Activated CD4-positive, alpha-beta T cell treated with anti-CD3 and anti-CD28 coated beads, Interleukin-2, amount 10 ng/mL, durations not matched to agents 24 days and 14 days (primary cell): ENCODE measurements at regions of chr14 and their contacts with region 1.

Region 1: GRCh38 chr14:88562831-88563686 is at the start of gene ZC3H14:
- DNase-seq: peak; percentile 97
- H3K4me3 Mint-ChIP-seq: peak within 1 kb of the TSS; percentile 94
- H3K27ac Mint-ChIP-seq: peak within 1 kb of the TSS; percentile 95
- H3K4me1 Mint-ChIP-seq: peaks cover 23% of the 10 kb centered on the region
- H3K27me3 Mint-ChIP-seq: peaks cover 27% of the 10 kb centered on the region
- total RNA-seq, gene ZC3H14: 59.2 and 64.7 TPM in 2 replicates

Region 2: DNA sequence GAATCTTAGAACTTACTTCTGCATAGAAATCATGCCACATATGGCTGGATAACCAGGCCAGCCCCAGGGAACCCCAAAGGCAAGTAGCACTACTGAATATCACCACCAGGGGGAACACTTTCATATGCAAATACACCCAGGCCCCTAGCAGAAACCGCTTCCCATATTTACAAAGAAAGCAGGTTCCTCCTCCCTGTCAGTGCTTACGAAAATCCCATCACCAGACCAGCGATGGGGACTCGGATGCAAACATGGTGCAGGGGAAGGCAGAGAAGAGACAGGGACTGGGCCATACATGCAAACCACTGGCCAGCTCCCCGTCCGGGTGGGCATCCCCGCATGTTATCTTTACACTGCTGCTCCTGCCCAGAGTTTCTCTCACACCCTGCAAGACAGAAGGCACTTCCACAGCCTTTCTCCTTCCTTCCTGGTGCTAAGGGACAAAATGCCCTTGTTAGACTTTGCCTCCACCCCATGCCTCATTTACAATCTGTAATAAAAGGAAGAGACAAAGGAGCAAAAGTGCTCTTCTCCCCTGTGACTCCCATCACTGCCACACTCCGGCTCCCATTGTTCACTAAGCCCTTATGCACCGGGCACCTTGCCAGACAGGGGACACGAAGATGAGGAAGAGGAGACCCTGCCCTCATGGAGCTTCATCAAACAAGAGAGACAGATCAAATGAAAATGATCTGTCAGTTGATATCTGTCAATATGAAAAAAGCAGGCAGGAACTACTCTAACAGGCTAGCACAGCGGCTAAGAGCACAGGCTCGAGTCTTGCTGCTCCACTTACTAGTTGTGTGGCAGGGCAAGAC is 70.6 kb before region 1 on chr14:
- intact Hi-C with region 1: loop called (anchors 2 kb)
- DNase-seq: peak; percentile 91
- H3K4me3 Mint-ChIP-seq: no peak overlapping the region
- H3K27ac Mint-ChIP-seq: no peak overlapping the region
- H3K4me1 Mint-ChIP-seq: peaks cover 5% of the 10 kb centered on the region
- H3K27me3 Mint-ChIP-seq: no peaks in the 10 kb centered on the region

Region 3: DNA sequence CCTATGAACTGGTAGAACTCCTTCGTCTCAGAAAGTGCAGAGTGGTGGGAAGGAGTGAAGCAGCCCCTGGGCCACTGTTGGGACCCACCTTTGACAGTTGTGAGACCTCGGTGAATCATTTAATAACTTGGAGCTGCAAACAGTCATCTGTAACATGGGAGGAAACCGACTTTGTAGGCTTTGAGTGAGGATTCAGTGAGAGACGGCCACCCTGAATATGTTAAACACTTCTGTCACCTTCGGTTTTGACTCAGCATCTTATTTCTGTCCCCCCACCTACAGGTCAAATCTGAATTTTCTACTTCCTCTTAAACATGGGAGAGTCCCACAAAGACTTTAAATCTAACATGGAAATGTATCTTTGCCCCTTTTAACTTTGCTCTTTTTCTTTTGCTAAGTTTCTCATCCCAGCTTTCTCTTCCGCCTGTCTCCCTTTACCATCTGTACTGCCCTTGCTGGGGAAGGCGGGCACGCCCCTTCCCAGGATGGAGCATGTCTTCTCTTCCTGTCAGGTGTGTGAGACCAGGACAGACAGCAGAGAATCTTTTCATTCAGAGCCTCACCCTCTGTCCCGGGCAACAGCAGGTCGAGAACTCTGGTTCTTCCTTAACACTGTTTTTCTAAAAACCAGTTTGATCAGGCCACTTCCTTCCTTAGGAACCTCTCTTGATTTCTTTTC is 36.8 kb after region 1 on chr14:
- intact Hi-C with region 1: loop called (anchors 2 kb)
- DNase-seq: peak; percentile 66
- H3K4me3 Mint-ChIP-seq: peak overlapping the region; percentile 71
- H3K27ac Mint-ChIP-seq: peak overlapping the region; percentile 94
- H3K4me1 Mint-ChIP-seq: peaks cover 33% of the 10 kb centered on the region
- H3K27me3 Mint-ChIP-seq: no peaks in the 10 kb centered on the region

Region 4: DNA sequence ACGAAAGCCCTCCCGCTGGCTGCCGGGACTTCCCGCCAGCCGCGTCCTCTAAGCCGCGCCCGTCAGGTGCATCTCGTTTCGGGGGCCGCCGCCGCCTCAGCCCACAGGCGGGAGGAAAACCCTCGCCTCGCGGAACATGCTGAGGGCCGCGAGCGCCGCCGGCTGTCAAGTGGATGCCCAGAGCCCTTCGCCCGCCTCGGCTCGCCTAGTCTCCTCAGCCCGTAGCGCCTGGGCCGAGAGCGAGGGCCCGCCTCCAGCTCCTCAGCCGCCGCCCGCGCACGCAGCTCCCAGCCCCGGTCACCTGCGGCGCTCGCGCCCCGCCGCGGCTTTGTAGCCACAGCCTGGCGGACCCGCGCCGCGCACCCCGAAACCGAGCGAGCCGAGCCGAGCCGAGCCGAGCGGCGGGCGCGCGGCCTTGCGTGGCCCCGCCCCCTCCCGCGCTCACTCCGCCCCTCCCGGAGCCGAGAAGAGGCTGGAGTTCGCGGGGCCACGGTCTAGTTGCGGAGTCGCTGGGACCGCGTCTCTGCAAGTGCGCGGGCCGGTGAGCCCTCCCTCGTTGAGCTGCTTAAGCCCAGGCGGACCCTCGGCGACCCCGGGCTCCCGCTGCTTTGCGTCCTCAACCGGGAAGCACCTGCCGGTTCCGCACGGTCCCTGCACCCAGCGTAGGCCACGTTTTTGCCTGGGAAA is 229.7 kb after region 1 on chr14 and contains the start of gene EML5:
- intact Hi-C with region 1: loop called (anchors 2 kb)
- DNase-seq: peak; percentile 95
- H3K4me3 Mint-ChIP-seq: peak within 1 kb of the TSS; percentile 83
- H3K27ac Mint-ChIP-seq: peak within 1 kb of the TSS; percentile 15
- H3K4me1 Mint-ChIP-seq: peaks cover 7% of the 10 kb centered on the region
- H3K27me3 Mint-ChIP-seq: peaks cover 37% of the 10 kb centered on the region
- total RNA-seq, gene EML5: 0.66 and 0.82 TPM in 2 replicates